ENCODE measurements at regions of chr3 and their contacts with region 1.

Region 1: GRCh38 chr3:129749692-129750091 is 143.2 kb upstream of the PLXND1 start:
- DNase-seq: peak; percentile 59
- H3K27ac ChIP-seq: no peak overlapping the region; the same call in 1 of the 2 replicates
- CTCF ChIP-seq: no peak

Region 2: GRCh38 chr3:129735638-129736037 is 14.1 kb before region 1 on chr3:
- CTCF ChIA-PET with region 1: no interaction called
- POLR2A ChIA-PET with region 1: interaction called, 10 read pairs
- DNase-seq: no peak
- H3K27ac ChIP-seq: no peak overlapping the region
- CTCF ChIP-seq: no peak

Measured in RWPE1 (cell line).